ENCODE measurements at regions of chr20 and their contacts with region 1.

Region 1: DNA sequence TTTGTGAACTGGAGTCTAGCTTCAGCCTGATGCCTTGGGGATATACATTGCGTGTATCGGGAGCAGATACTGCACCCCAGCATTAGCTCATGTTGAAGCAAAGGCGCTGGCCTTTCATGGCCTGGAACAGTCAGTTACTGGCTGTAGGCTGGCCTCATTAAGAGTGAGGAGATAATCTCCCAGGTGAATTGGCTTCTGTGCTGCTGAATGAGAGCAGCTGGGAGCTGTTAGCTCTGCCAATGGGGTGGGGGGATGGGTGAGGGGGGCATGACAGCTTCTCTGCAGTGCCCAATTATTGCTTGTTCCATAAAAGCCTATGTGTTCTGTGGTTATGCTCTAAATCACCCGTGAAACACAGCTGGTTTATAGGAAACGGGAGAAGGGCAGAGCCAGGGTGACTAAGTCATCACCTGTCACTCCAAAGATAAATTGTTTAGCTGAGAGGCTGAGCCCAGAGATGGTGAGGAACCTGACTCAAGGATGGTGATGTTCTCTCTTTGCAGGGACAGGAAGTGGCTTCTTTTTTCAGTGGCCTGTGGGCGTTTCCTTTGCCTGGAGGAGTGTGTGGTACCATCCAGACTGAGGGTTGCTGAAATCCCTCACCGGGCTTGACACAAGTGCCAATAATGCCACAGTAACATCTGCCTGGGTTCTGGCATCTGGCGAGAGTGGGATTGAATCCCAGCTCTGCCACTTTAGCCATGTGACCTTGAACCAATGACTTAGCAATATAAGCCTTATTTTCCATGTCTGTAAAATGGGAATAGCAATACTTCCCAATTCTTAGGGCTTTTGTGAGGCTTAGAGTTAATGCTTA is 170.8 kb downstream of the BCAS1 start:
- DNase-seq: peak; percentile 94
- H3K4me3 Mint-ChIP-seq: no peak overlapping the region
- H3K27ac Mint-ChIP-seq: peak overlapping the region; percentile 85
- H3K4me1 Mint-ChIP-seq: peaks cover 49% of the 10 kb centered on the region
- H3K27me3 Mint-ChIP-seq: no peaks in the 10 kb centered on the region

Region 2: DNA sequence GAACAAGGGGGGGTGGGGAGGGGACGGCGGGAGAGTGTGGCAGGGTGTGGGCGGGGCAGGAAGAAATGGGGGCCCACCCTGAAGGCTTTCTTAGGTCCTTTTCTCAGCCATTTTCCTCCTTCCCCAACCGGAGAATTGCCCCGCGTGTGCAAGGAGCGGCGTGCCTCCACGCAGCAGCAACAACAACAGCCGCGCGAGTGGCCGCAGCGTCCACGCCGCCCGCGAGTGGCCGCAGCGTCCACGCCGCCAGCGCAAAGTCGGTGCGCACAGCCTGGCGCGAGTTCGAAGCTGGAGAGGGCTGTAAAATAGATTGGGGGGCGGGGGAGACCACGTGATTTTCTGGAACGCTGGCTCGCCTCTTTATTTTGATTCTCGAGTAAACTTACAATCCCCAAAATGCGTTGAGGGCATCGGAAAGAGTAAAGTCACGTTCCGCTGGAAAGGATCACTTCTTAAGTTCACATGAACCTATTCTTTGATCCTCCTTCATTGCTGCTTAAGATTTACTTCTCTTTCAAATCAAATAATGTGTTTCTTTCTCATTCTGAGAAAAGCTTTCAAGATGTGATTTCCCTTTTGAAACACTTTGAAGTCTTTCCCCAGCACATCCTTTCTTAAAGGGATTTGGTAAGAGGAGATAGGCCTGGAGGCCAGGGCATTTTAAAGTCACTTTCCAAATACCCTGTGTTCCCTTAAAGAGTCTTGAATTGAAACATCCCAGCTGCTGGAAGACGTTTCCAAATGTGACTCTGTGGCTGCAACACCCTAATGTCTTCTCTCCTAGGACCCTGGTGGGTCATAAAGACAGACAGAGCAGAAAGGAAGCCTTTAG is 239.3 kb before region 1 on chr20:
- CTCF ChIA-PET with region 1: no interaction called
- intact Hi-C with region 1: loop called (anchors 2 kb)
- DNase-seq: peak; percentile 56
- H3K4me3 Mint-ChIP-seq: peak overlapping the region; percentile 77
- H3K27ac Mint-ChIP-seq: peak overlapping the region; percentile 88
- H3K4me1 Mint-ChIP-seq: peaks cover 61% of the 10 kb centered on the region
- H3K27me3 Mint-ChIP-seq: no peaks in the 10 kb centered on the region

Region 3: DNA sequence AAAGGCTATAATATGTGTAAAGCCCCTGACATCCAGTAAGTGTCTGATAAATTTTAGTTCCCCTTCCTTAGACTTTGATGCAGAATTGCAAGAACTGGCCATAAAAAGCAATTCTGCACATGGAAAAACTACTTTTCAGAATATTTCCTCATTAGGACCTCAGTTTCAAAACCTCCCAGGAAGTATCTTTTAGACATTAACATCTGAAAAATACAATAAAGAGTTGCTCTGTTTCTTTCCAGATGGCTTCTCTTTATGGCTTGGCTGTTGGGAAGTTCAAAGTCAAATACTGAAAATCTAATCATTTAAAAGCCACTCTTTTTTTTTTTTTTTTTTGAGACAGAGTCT is 199.6 kb before region 1 on chr20:
- CTCF ChIA-PET with region 1: no interaction called
- intact Hi-C with region 1: no loop called
- DNase-seq: no peak
- H3K4me3 Mint-ChIP-seq: no peak overlapping the region
- H3K27ac Mint-ChIP-seq: no peak overlapping the region
- H3K4me1 Mint-ChIP-seq: peaks cover 16% of the 10 kb centered on the region
- H3K27me3 Mint-ChIP-seq: no peaks in the 10 kb centered on the region

Region 4: GRCh38 chr20:53834062-53834442 is 65.5 kb before region 1 on chr20:
- CTCF ChIA-PET with region 1: no interaction called
- intact Hi-C with region 1: loop called (anchors 2 kb)
- DNase-seq: no peak
- H3K4me3 Mint-ChIP-seq: no peak overlapping the region
- H3K27ac Mint-ChIP-seq: no peak overlapping the region
- H3K4me1 Mint-ChIP-seq: peaks cover 53% of the 10 kb centered on the region
- H3K27me3 Mint-ChIP-seq: no peaks in the 10 kb centered on the region

Region 5: GRCh38 chr20:53839423-53840176 is 60.0 kb before region 1 on chr20:
- CTCF ChIA-PET with region 1: interaction called, 5 read pairs
- intact Hi-C with region 1: loop called (anchors 1 kb)
- DNase-seq: peak; percentile 65
- H3K4me3 Mint-ChIP-seq: peak overlapping the region; percentile 51
- H3K27ac Mint-ChIP-seq: peak overlapping the region; percentile 78
- H3K4me1 Mint-ChIP-seq: peaks cover 73% of the 10 kb centered on the region
- H3K27me3 Mint-ChIP-seq: no peaks in the 10 kb centered on the region

Region 6: GRCh38 chr20:53883098-53883811 is 16.3 kb before region 1 on chr20:
- CTCF ChIA-PET with region 1: interaction called, 11 read pairs
- intact Hi-C with region 1: loop called (anchors 2 kb)
- DNase-seq: peak; percentile 25
- H3K4me3 Mint-ChIP-seq: no peak overlapping the region
- H3K27ac Mint-ChIP-seq: no peak overlapping the region
- H3K4me1 Mint-ChIP-seq: peaks cover 50% of the 10 kb centered on the region
- H3K27me3 Mint-ChIP-seq: no peaks in the 10 kb centered on the region

Region 7: DNA sequence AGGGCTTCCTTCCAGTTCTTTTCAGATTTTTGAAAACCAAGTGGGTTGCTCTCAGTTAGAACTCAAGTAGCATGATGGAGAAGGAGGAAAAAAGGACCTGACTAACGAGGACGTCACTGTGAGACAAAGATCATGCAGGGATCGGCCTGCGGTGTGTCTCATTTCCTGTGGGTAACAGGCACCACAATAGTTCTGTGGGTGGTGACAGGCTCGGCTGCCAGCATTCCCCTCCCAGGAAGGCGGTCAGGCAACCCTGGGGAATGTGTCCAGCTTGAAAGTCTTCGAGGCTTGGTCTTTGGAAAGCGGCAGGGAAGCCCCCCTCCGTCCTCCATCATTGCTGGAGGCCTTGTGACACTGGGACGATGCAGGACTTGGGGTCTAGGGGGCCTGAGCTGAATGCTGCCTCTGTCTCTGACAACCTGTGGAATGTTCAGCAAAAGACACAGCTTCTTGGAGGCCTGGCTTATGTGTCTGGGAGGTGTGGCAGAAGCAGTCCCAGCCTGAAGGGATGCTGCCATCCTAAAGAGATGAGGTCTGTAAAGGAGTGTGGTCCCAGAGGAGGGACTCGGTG is 49.8 kb after region 1 on chr20:
- CTCF ChIA-PET with region 1: interaction called, 4 read pairs
- intact Hi-C with region 1: loop called (anchors 1 kb)
- DNase-seq: peak; percentile 91
- H3K4me3 Mint-ChIP-seq: peak overlapping the region; percentile 61
- H3K27ac Mint-ChIP-seq: peak overlapping the region; percentile 89
- H3K4me1 Mint-ChIP-seq: peaks cover 29% of the 10 kb centered on the region
- H3K27me3 Mint-ChIP-seq: no peaks in the 10 kb centered on the region

Measured in activated naive CD4-positive, alpha-beta T cell treated with anti-CD3 and anti-CD28 coated beads for 36 hours (primary cell).